Endothelial cell of umbilical vein (primary cell): ENCODE measurements at regions of chr1 and their contacts with region 1.

Region 1: GRCh38 chr1:207818971-207819451 is 67.2 kb downstream of the CD46 start:
- DNase-seq: peak; percentile 77
- H3K4me3 ChIP-seq: no peak overlapping the region
- H3K27ac ChIP-seq: peak overlapping the region; percentile 70
- H3K4me1 ChIP-seq: peaks cover 31% of the 10 kb centered on the region
- H3K27me3 ChIP-seq: no peaks in the 10 kb centered on the region
- CTCF ChIP-seq: no peak
- POLR2A ChIP-seq: no peak

Region 2: DNA sequence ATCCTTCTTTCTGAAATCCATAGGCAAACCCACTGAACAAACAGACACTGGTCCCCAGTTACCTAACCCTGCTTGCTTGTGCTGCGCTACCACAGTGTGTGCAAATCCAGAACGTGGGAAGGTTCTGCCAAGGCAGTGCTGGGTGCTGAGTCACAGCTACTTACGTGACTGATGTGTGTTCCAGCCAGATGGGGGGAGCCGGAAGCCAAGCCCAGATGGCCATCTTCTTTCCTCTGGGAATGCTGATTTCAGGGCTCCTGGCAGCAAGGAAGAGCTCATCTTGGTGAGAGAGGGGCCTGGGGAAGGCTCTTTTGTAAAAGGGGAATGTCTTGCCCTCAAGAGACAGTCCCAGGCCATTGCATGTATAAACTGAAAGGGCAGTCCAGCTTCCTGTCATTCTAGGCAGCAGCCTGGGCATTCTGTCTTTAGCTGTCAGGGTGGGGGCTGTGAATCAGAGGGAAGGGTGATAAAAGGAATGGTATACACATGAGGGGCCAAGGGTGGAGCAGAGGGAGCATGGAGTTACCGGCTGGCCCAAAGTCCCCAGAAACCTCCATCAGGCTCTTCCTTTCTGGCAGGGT is 13.1 kb before region 1 on chr1:
- CTCF ChIA-PET with region 1: interaction called, 25 read pairs
- POLR2A ChIA-PET with region 1: interaction called, 5 read pairs
- dilution Hi-C with region 1: no loop called
- intact Hi-C with region 1: no loop called
- DNase-seq: peak; percentile 87
- H3K4me3 ChIP-seq: no peak overlapping the region
- H3K27ac ChIP-seq: peak overlapping the region; percentile 83
- H3K4me1 ChIP-seq: peaks cover 23% of the 10 kb centered on the region
- H3K27me3 ChIP-seq: no peaks in the 10 kb centered on the region
- CTCF ChIP-seq: no peak
- POLR2A ChIP-seq: no peak